ENCODE measurements at regions of chrX and their contacts with region 1.

Region 1: DNA sequence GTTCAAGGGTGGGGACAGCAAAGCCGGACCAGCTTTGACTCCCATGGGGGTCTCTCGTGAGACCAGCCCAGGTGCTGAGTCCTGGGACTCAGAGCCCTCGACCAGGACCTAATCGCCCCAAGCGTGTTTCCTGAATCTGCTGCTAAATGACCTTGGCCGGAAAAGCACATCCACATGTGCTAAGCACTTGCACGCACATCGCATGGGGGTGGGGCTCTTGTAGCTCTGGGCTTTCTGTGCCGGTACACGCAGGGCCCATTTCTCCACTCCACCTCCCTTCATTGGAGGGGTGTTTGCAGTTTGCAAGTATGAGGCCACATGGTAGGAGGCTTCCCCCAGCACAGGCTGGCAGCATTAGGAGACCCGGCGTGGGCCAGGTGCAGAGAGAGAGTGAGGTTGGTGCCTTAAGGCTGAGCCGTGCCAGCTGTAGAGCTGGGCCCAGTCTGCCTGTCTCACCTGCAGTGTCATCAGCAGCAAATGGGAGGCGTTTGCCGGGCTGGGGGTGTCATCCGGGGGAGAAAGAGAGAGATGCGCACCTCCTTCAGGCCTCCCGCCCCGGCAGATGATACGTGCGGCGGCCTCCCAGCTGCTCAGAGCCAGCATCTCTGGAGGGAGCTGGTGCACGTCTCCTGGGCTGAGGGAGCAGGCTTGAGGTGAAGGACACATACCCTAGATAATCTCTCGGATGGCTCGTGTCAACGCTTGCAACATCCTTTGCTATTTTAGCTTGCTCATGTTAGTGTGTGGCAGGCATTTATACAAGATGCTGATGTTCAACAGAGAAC is 45.2 kb upstream of the CLCN4 start:
- DNase-seq: peak; percentile 32
- ATAC-seq: peak; percentile 60
- H3K4me3 ChIP-seq: no peak overlapping the region
- H3K27ac ChIP-seq: no peak overlapping the region
- H3K4me1 ChIP-seq: 0 out of 2 replicates have a peak, but pooled peaks cover 14% of the 10 kb centered on the region
- H3K27me3 ChIP-seq: no peaks in the 10 kb centered on the region
- CTCF ChIP-seq: no peak
- EP300 ChIP-seq: no peak
- POLR2A ChIP-seq: no peak
- RAD21 ChIP-seq: no peak

Region 2: GRCh38 chrX:9501362-9501761 is 610.2 kb before region 1 on chrX:
- CTCF ChIA-PET with region 1: no interaction called
- POLR2A ChIA-PET with region 1: no interaction called
- in situ Hi-C with region 1: no loop called
- intact Hi-C with region 1: no loop called
- DNase-seq: no peak
- ATAC-seq: peak; percentile 42; the same call in 1 of the 3 replicates
- H3K4me3 ChIP-seq: no peak overlapping the region
- H3K27ac ChIP-seq: no peak overlapping the region
- H3K4me1 ChIP-seq: peaks cover 11% of the 10 kb centered on the region
- H3K27me3 ChIP-seq: no peaks in the 10 kb centered on the region
- CTCF ChIP-seq: peak; percentile 41
- EP300 ChIP-seq: no peak
- POLR2A ChIP-seq: no peak
- RAD21 ChIP-seq: no peak

Region 3: DNA sequence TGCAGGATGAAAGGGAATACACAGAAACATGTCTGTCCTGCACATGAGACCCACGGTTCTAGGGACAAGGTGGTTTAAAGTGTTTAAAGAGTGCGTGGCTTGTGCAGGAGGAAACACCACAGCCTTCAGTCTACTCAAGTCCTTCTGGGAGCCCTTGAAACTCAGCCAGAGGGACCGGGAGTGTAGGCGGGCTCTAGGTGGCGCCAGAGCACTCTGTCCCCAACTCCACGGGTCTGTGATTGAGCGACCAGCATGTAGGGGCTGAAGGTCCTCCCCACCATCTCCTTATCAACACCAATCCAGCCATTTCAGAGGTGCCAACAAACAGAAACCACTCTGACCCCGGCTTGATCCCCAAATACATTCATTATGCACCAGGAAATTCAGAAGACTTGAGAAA is 226.4 kb before region 1 on chrX:
- CTCF ChIA-PET with region 1: no interaction called
- POLR2A ChIA-PET with region 1: no interaction called
- in situ Hi-C with region 1: loop called (anchors 10 kb)
- intact Hi-C with region 1: no loop called
- DNase-seq: peak; percentile 30
- ATAC-seq: peak; percentile 93
- H3K4me3 ChIP-seq: no peak overlapping the region
- H3K27ac ChIP-seq: no peak overlapping the region
- H3K4me1 ChIP-seq: 0 out of 2 replicates have a peak, but pooled peaks cover 21% of the 10 kb centered on the region
- H3K27me3 ChIP-seq: no peaks in the 10 kb centered on the region
- CTCF ChIP-seq: peak; percentile 78
- EP300 ChIP-seq: no peak
- POLR2A ChIP-seq: no peak
- RAD21 ChIP-seq: peak; percentile 36; the same call in 1 of the 2 replicates

Measured in HepG2 (cell line).